ENCODE measurements at regions of chr12 and their contacts with region 1.

Region 1: GRCh38 chr12:40107098-40107802 is 1.4 kb upstream of the SLC2A13 start:
- DNase-seq: peak; percentile 83
- H3K4me3 Mint-ChIP-seq: peak overlapping the region; percentile 76
- H3K27ac Mint-ChIP-seq: no peak overlapping the region
- H3K4me1 Mint-ChIP-seq: peaks cover 14% of the 10 kb centered on the region
- H3K27me3 Mint-ChIP-seq: no peaks in the 10 kb centered on the region
- CTCF ChIP-seq: peak; percentile 79

Region 2: GRCh38 chr12:39476118-39476517 is 631.1 kb before region 1 on chr12:
- CTCF ChIA-PET with region 1: no interaction called
- POLR2A ChIA-PET with region 1: no interaction called
- intact Hi-C with region 1: no loop called
- DNase-seq: no peak
- H3K4me3 Mint-ChIP-seq: no peak overlapping the region
- H3K27ac Mint-ChIP-seq: no peak overlapping the region
- H3K4me1 Mint-ChIP-seq: no peaks in the 10 kb centered on the region
- H3K27me3 Mint-ChIP-seq: no peaks in the 10 kb centered on the region
- CTCF ChIP-seq: no peak

Region 3: DNA sequence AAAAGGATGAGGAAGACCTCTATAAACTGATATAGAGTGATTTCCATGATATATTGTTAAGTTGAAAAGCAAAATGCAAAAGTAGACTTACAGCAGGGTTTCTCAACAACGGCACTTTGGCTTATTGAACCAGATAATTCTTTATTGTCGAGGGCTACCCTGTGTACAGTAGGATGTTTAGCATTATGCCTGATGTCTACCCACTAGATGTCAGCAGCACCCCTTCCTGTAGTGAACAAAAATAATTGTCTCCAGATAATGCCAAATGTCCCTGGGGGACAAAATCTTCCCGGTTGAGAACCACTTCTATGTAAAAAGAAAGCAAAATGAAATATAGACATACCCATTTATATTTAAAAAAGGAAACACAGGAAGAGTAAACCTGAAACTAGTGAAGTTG is 520.0 kb before region 1 on chr12:
- CTCF ChIA-PET with region 1: interaction called, 3 read pairs
- POLR2A ChIA-PET with region 1: no interaction called
- intact Hi-C with region 1: loop called (anchors 1 kb)
- DNase-seq: peak; percentile 60
- H3K4me3 Mint-ChIP-seq: no peak overlapping the region
- H3K27ac Mint-ChIP-seq: no peak overlapping the region
- H3K4me1 Mint-ChIP-seq: peaks cover 23% of the 10 kb centered on the region
- H3K27me3 Mint-ChIP-seq: no peaks in the 10 kb centered on the region
- CTCF ChIP-seq: peak; percentile 43

Region 4: GRCh38 chr12:40010899-40011774 is 96.1 kb before region 1 on chr12:
- CTCF ChIA-PET with region 1: interaction called, 182 read pairs
- POLR2A ChIA-PET with region 1: interaction called, 13 read pairs
- intact Hi-C with region 1: loop called (anchors 1 kb)
- DNase-seq: peak; percentile 83
- H3K4me3 Mint-ChIP-seq: peak overlapping the region; percentile 40
- H3K27ac Mint-ChIP-seq: no peak overlapping the region
- H3K4me1 Mint-ChIP-seq: peaks cover 13% of the 10 kb centered on the region
- H3K27me3 Mint-ChIP-seq: no peaks in the 10 kb centered on the region
- CTCF ChIP-seq: peak; percentile 83

Region 5: DNA sequence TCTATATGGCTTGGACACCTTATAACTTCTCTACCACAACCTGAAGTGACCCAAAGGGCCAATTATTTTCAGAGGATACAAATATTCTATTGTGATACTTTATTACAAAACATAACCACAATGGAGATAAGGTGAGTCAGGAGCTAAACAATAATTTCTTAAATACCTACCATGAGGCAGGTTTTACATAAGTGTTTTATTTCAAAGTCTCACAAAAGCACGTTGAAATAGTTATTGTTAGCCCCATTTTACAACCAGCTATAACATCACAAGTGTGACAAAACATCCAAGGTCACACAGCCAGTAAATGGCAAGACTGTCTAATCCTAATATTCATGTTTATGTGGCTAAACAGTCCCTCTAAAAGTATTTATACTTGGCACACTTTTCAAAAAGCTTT is 41.6 kb before region 1 on chr12:
- CTCF ChIA-PET with region 1: interaction called, 19 read pairs
- POLR2A ChIA-PET with region 1: interaction called, 6 read pairs
- intact Hi-C with region 1: no loop called
- DNase-seq: no peak
- H3K4me3 Mint-ChIP-seq: no peak overlapping the region
- H3K27ac Mint-ChIP-seq: no peak overlapping the region
- H3K4me1 Mint-ChIP-seq: peaks cover 7% of the 10 kb centered on the region
- H3K27me3 Mint-ChIP-seq: no peaks in the 10 kb centered on the region
- CTCF ChIP-seq: no peak

Region 6: GRCh38 chr12:40127408-40127807 is 20.2 kb after region 1 on chr12:
- CTCF ChIA-PET with region 1: interaction called, 23 read pairs
- POLR2A ChIA-PET with region 1: interaction called, 3 read pairs
- intact Hi-C with region 1: no loop called
- DNase-seq: no peak
- H3K4me3 Mint-ChIP-seq: no peak overlapping the region
- H3K27ac Mint-ChIP-seq: no peak overlapping the region
- H3K4me1 Mint-ChIP-seq: no peaks in the 10 kb centered on the region
- H3K27me3 Mint-ChIP-seq: no peaks in the 10 kb centered on the region
- CTCF ChIP-seq: no peak

Region 7: GRCh38 chr12:40192704-40193255 is 85.5 kb after region 1 on chr12:
- CTCF ChIA-PET with region 1: no interaction called
- POLR2A ChIA-PET with region 1: no interaction called
- intact Hi-C with region 1: no loop called
- DNase-seq: no peak
- H3K4me3 Mint-ChIP-seq: no peak overlapping the region
- H3K27ac Mint-ChIP-seq: no peak overlapping the region
- H3K4me1 Mint-ChIP-seq: no peaks in the 10 kb centered on the region
- H3K27me3 Mint-ChIP-seq: no peaks in the 10 kb centered on the region
- CTCF ChIP-seq: no peak

Region 8: GRCh38 chr12:40292788-40293429 is 185.7 kb after region 1 on chr12:
- CTCF ChIA-PET with region 1: no interaction called
- POLR2A ChIA-PET with region 1: no interaction called
- intact Hi-C with region 1: no loop called
- DNase-seq: no peak
- H3K4me3 Mint-ChIP-seq: no peak overlapping the region
- H3K27ac Mint-ChIP-seq: no peak overlapping the region
- H3K4me1 Mint-ChIP-seq: no peaks in the 10 kb centered on the region
- H3K27me3 Mint-ChIP-seq: no peaks in the 10 kb centered on the region
- CTCF ChIP-seq: no peak

Region 9: GRCh38 chr12:40312982-40313576 is 205.8 kb after region 1 on chr12:
- CTCF ChIA-PET with region 1: interaction called, 27 read pairs
- POLR2A ChIA-PET with region 1: interaction called, 3 read pairs
- intact Hi-C with region 1: no loop called
- DNase-seq: peak; percentile 34
- H3K4me3 Mint-ChIP-seq: no peak overlapping the region
- H3K27ac Mint-ChIP-seq: no peak overlapping the region
- H3K4me1 Mint-ChIP-seq: peaks cover 6% of the 10 kb centered on the region
- H3K27me3 Mint-ChIP-seq: no peaks in the 10 kb centered on the region
- CTCF ChIP-seq: peak; percentile 61